T-cell (primary cell): ENCODE measurements at regions of chr18 and their contacts with region 1.

Region 1: GRCh38 chr18:45967007-45967706 is at the start of gene EPG5:
- DNase-seq: peak; percentile 73 to 93 (median 85)
- ATAC-seq: peak; percentile 92 to 98 (median 96)
- H3K4me3 ChIP-seq: peak within 1 kb of the TSS; percentile 78 to 89
- H3K4me3 Mint-ChIP-seq: peak within 1 kb of the TSS; percentile 87 to 99 (median 98)
- H3K27ac ChIP-seq: peak within 1 kb of the TSS; percentile 59
- H3K27ac Mint-ChIP-seq: peak within 1 kb of the TSS; percentile 92 to 98
- H3K4me1 ChIP-seq: peaks cover 14 to 28% of the 10 kb centered on the region in 2 experiments
- H3K4me1 Mint-ChIP-seq: peaks cover 44 to 56% (median 46%) of the 10 kb centered on the region in 3 donors
- H3K27me3 ChIP-seq: no peaks in the 10 kb centered on the region
- H3K27me3 Mint-ChIP-seq: no peaks in the 10 kb centered on the region
- total RNA-seq, gene EPG5: 39.2 to 54.4 (median 42.6) TPM

Region 2: DNA sequence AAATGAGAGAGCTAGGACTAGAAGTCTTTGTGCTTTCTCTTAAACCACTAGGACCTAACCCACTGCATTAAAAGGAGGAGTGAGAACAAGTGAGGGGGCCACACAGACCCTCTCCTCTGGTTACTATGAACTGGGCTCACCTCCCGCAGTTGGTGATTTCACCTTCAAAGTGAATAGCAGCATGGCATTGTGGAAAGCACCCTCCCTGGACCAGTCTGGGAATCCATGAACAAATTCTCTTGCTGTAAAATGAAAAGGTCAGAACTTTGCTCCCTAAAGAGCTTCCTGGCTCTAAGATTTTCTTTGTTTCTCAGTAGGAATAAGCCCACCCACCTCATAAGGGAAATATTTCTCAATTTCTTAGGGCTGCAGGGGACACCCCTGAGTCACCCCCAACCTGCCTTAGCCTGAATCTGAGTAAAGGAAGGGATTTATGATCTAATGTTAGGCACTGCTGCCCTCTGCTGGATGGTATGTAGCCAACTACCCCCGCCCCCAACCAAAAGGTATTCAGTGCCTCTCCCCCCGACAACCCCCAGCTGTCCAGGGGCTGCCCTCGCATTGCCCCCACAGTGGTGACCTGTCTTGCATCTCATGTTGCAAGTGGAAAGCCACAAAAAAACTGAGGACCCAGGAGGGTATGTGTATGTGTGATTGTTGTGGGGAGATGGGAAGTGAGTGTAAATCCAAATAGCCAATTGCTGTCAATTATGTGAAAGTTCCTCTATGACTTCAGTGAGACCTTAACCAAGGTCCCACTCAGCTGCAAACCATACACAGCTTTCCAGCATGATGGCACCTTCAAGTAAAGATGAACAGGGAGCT is 582.8 kb before region 1 on chr18:
- CTCF ChIA-PET with region 1: no interaction called
- POLR2A ChIA-PET with region 1: no interaction called
- DNase-seq: peak in 24 of 35 experiments; percentile 1 to 54 (median 9)
- ATAC-seq: no peak
- H3K4me3 ChIP-seq: no peak overlapping the region
- H3K4me3 Mint-ChIP-seq: no peak overlapping the region
- H3K27ac ChIP-seq: no peak overlapping the region
- H3K27ac Mint-ChIP-seq: no peak overlapping the region
- H3K4me1 ChIP-seq: no peaks in the 10 kb centered on the region
- H3K4me1 Mint-ChIP-seq: no peaks in the 10 kb centered on the region
- H3K27me3 ChIP-seq: peaks cover 0 to 18% of the 10 kb centered on the region in 2 experiments
- H3K27me3 Mint-ChIP-seq: peaks cover 22 to 34% of the 10 kb centered on the region in 2 donors

Region 3: GRCh38 chr18:45851161-45851925 is 115.8 kb before region 1 on chr18:
- CTCF ChIA-PET with region 1: interaction called in 1 of 2 experiments, 10 read pairs
- POLR2A ChIA-PET with region 1: no interaction called
- DNase-seq: no peak
- ATAC-seq: no peak
- H3K4me3 ChIP-seq: no peak overlapping the region
- H3K4me3 Mint-ChIP-seq: no peak overlapping the region
- H3K27ac ChIP-seq: no peak overlapping the region
- H3K27ac Mint-ChIP-seq: no peak overlapping the region
- H3K4me1 ChIP-seq: no peaks in the 10 kb centered on the region
- H3K4me1 Mint-ChIP-seq: no peaks in the 10 kb centered on the region
- H3K27me3 ChIP-seq: no peaks in the 10 kb centered on the region
- H3K27me3 Mint-ChIP-seq: no peaks in the 10 kb centered on the region

Region 4: DNA sequence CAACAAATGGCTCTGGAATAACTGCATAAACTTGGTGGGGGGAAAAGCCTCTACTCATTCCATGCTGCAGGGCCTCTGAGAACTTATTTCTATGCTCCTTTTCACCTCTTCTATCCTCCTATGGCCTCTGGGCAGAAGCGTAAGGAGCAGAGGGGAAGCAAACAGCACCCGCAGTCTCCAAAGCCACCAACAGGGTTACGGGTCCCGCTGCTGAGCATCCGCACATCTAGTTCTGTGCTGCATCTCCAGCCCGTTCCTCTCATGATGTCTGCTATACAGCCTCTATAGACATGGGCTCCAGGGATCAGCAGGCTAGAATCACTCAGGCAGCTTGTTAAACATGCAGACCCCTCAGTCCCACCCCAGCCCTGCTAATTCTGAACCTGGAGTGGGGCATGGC is 79.0 kb after region 1 on chr18:
- CTCF ChIA-PET with region 1: no interaction called
- POLR2A ChIA-PET with region 1: no interaction called
- DNase-seq: no peak
- ATAC-seq: no peak
- H3K4me3 ChIP-seq: no peak overlapping the region
- H3K4me3 Mint-ChIP-seq: no peak overlapping the region
- H3K27ac ChIP-seq: no peak overlapping the region
- H3K27ac Mint-ChIP-seq: peak overlapping the region in 1 of 2 donors; percentile 57
- H3K4me1 ChIP-seq: peaks cover 11 to 21% of the 10 kb centered on the region in 2 experiments
- H3K4me1 Mint-ChIP-seq: peaks cover 32 to 39% (median 35%) of the 10 kb centered on the region in 3 donors
- H3K27me3 ChIP-seq: no peaks in the 10 kb centered on the region
- H3K27me3 Mint-ChIP-seq: no peaks in the 10 kb centered on the region

Region 5: DNA sequence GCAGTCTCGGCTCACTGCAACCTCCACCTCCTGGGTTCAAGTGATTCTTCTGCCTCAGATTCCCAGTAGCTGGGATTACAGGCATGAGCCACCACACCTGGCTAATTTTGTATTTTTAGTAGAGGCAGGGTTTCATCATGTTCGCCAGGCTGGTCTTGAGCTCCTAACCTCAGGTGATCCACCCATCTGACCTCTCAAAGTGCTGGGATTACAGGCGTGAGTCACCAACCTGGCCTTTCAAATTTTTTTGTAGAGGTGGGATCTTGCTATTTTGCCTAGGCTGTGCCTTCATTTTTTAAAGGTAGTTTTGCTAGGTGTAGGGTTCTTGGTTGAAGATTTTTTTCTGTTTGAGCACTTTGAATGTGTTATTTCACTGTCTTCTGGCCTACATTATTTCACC is 143.2 kb after region 1 on chr18:
- CTCF ChIA-PET with region 1: interaction called in 1 of 2 experiments, 11 read pairs
- POLR2A ChIA-PET with region 1: no interaction called
- DNase-seq: no peak
- ATAC-seq: no peak
- H3K4me3 ChIP-seq: no peak overlapping the region
- H3K4me3 Mint-ChIP-seq: no peak overlapping the region
- H3K27ac ChIP-seq: no peak overlapping the region
- H3K27ac Mint-ChIP-seq: no peak overlapping the region
- H3K4me1 ChIP-seq: peaks cover 0 to 4% of the 10 kb centered on the region in 2 experiments
- H3K4me1 Mint-ChIP-seq: peaks cover 9 to 33% (median 25%) of the 10 kb centered on the region in 3 donors
- H3K27me3 ChIP-seq: no peaks in the 10 kb centered on the region
- H3K27me3 Mint-ChIP-seq: no peaks in the 10 kb centered on the region

Region 6: DNA sequence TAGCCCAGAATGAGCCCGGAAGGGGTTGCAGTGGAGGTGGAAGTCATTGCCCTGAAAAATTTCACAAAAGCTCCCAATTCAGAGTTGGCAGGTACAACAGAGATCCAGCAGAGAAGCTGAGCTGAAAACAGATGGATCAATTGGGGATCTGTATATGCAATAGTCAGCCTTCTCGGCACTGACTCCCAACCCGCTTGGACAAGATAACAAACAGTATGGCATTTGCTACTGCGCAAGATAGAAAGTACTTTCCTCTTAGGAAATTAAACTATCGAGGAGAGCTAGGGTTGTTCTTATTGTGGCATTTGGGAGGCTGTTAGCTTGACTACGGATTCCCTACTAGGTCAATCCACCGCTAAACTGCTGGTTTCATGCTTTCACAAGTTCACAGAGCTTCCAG is 1220.6 kb after region 1 on chr18:
- CTCF ChIA-PET with region 1: interaction called in 1 of 2 experiments, 12 read pairs
- POLR2A ChIA-PET with region 1: no interaction called
- DNase-seq: no peak
- ATAC-seq: no peak
- H3K4me3 ChIP-seq: no peak overlapping the region
- H3K4me3 Mint-ChIP-seq: no peak overlapping the region
- H3K27ac ChIP-seq: no peak overlapping the region
- H3K27ac Mint-ChIP-seq: no peak overlapping the region
- H3K4me1 ChIP-seq: no peaks in the 10 kb centered on the region
- H3K4me1 Mint-ChIP-seq: no peaks in the 10 kb centered on the region
- H3K27me3 ChIP-seq: peaks cover 0 to 2% of the 10 kb centered on the region in 2 experiments
- H3K27me3 Mint-ChIP-seq: peaks cover 19 to 29% of the 10 kb centered on the region in 2 donors